Caco-2 (cell line): ENCODE measurements at regions of chr1 and their contacts with region 1.

Region 1: DNA sequence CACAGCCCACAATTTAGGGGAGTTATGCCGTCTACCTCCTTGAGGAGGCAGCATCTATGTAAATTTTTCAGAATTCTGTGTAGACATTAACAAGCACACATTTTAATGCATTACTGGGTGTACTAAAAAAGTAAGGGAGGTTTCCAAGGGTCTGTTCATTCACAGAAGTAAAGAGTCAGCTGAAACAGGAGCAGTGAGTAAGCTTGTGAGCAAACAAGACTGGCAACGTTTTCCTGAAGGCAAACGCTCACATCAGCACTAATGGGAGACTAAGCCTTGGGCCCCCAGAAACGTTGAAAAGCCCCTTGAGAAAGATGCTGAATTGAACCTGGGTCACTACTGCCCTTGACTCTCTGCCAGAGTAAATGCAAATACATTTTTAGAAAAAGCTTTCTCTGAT is 25.7 kb downstream of the RPRD2 start:
- DNase-seq: no peak
- H3K4me3 ChIP-seq: no peak overlapping the region
- H3K4me3 Mint-ChIP-seq: no peak overlapping the region
- H3K27ac Mint-ChIP-seq: no peak overlapping the region
- H3K4me1 ChIP-seq: peaks cover 9% of the 10 kb centered on the region; the same call in 1 of the 2 replicates
- H3K4me1 Mint-ChIP-seq: peaks cover 20% of the 10 kb centered on the region
- H3K27me3 ChIP-seq: no peaks in the 10 kb centered on the region
- H3K27me3 Mint-ChIP-seq: no peaks in the 10 kb centered on the region
- CTCF ChIP-seq: no peak

Region 2: DNA sequence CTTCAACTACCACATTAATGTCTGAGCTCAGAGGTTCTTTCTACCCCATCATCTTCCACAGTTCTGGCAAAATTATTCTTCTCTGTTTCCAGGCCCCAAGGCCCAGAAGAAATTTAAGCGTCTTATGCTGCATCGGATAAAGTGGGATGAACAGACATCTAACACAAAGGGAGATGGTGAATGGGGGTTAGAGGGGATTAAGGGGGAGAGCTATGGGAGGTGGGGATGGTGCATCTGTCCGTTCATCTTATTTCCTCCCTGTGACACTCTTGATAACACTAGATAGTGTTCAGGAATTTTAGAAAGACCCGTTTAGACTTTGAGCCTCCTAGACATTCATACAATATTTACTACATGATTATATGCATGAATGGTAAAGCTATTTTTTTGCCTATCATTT is 43.3 kb before region 1 on chr1:
- CTCF ChIA-PET with region 1: no interaction called
- POLR2A ChIA-PET with region 1: no interaction called
- intact Hi-C with region 1: no loop called
- DNase-seq: no peak
- H3K4me3 ChIP-seq: no peak overlapping the region
- H3K4me3 Mint-ChIP-seq: no peak overlapping the region
- H3K27ac Mint-ChIP-seq: no peak overlapping the region
- H3K4me1 ChIP-seq: no peaks in the 10 kb centered on the region
- H3K4me1 Mint-ChIP-seq: no peaks in the 10 kb centered on the region
- H3K27me3 ChIP-seq: no peaks in the 10 kb centered on the region
- H3K27me3 Mint-ChIP-seq: no peaks in the 10 kb centered on the region
- CTCF ChIP-seq: no peak

Region 3: DNA sequence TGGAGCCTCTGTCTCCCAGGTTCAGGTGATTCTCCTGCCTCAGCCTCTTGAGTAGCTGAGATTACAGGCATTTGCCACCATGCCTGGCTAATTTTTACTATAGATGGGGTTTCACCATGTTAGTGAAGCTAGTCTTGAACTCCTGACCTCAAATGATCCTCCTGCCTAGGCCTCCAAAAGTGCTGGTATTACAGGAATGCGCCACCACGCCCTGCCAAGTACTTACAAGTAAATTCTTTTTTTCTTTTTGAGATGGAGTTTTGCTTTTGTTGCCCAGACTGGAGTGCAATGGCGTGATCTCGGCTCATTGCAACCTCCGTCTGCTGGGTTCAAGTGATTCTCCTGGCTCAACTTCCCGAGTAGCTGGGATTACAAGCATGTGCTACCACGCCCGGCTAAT is 16.8 kb after region 1 on chr1:
- CTCF ChIA-PET with region 1: no interaction called
- POLR2A ChIA-PET with region 1: no interaction called
- intact Hi-C with region 1: loop called (anchors 1 kb)
- DNase-seq: peak in 1 of 2 experiments; percentile 61
- H3K4me3 ChIP-seq: no peak overlapping the region
- H3K4me3 Mint-ChIP-seq: no peak overlapping the region
- H3K27ac Mint-ChIP-seq: no peak overlapping the region
- H3K4me1 ChIP-seq: peaks cover 44% of the 10 kb centered on the region
- H3K4me1 Mint-ChIP-seq: peaks cover 42% of the 10 kb centered on the region
- H3K27me3 ChIP-seq: no peaks in the 10 kb centered on the region
- H3K27me3 Mint-ChIP-seq: no peaks in the 10 kb centered on the region
- CTCF ChIP-seq: no peak